Body of pancreas (tissue), 4 donors: ENCODE measurements at regions of chr18 and their contacts with region 1.

Region 1: GRCh38 chr18:79380816-79381806 is 14.6 kb upstream of the NFATC1 start:
- DNase-seq: peak; percentile 65 to 80 (median 72)
- ATAC-seq: peak; percentile 63
- H3K4me3 ChIP-seq: no peak overlapping the region
- H3K27ac ChIP-seq: no peak overlapping the region
- H3K4me1 ChIP-seq: no peaks in the 10 kb centered on the region
- H3K27me3 ChIP-seq: no peaks in the 10 kb centered on the region
- CTCF ChIP-seq: peak; percentile 71 to 88 (median 80)
- POLR2A ChIP-seq: no peak

Region 2: DNA sequence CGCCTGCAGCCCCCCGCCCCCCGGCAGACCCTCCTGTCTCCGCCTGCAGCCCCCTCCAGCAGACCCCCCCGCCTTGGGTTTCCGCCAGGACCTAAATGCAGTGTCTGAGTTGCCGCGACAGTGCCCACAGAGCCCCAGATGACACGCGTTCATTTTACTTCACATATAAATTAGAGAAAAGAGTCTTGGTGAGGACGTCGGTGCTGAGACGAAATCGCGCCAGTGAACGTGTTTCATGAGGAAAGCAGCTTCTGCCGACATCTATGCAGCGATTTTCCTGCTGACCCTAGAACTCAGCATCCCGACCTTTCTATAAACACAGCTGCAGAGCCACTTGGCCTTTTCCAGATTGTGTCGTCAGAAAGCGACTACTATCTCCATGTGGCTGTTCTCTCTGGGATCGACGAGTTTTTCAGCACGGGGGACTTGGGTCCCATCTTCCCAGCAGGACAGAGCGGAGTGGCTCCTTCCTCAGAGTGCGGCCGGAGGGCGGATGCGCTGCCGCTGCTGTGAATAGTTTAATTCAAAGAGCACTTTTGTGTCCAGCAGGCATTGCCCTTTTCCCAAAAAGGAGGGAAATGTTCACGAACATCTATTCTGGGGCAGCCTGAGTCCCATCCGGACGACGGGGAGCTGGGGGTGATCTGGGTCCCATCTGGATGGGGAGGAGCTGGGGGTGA is 151.4 kb after region 1 on chr18:
- intact Hi-C with region 1: loop called (anchors 5 kb)
- DNase-seq: peak in 1 of 4 donors; percentile 4
- ATAC-seq: no peak
- H3K4me3 ChIP-seq: no peak overlapping the region
- H3K27ac ChIP-seq: no peak overlapping the region
- H3K4me1 ChIP-seq: no peaks in the 10 kb centered on the region
- H3K27me3 ChIP-seq: no peaks in the 10 kb centered on the region
- CTCF ChIP-seq: no peak
- POLR2A ChIP-seq: no peak

Region 3: GRCh38 chr18:79644006-79644665 is 263.0 kb after region 1 on chr18:
- intact Hi-C with region 1: loop called (anchors 5 kb)
- DNase-seq: peak; percentile 56 to 68 (median 58)
- ATAC-seq: peak; percentile 62
- H3K4me3 ChIP-seq: no peak overlapping the region
- H3K27ac ChIP-seq: no peak overlapping the region
- H3K4me1 ChIP-seq: no peaks in the 10 kb centered on the region
- H3K27me3 ChIP-seq: no peaks in the 10 kb centered on the region
- CTCF ChIP-seq: peak; percentile 73 to 92 (median 86)
- POLR2A ChIP-seq: no peak